ENCODE measurements at regions of chr4 and their contacts with region 1.

Region 1: GRCh38 chr4:163484906-163485305 is 9.6 kb upstream of the TMA16 start:
- DNase-seq: peak in 1 of 2 donors; percentile 29
- ATAC-seq: peak in 1 of 8 donors; percentile 41
- H3K4me3 ChIP-seq: no peak overlapping the region
- H3K27ac ChIP-seq: no peak overlapping the region
- H3K4me1 ChIP-seq: peaks cover 0 to 13% (median 0%) of the 10 kb centered on the region in 9 donors
- H3K27me3 ChIP-seq: peaks cover 0 to 6% (median 0%) of the 10 kb centered on the region in 7 donors
- CTCF ChIP-seq: peak in 8 of 9 donors; percentile 31 to 68 (median 56)

Region 2: DNA sequence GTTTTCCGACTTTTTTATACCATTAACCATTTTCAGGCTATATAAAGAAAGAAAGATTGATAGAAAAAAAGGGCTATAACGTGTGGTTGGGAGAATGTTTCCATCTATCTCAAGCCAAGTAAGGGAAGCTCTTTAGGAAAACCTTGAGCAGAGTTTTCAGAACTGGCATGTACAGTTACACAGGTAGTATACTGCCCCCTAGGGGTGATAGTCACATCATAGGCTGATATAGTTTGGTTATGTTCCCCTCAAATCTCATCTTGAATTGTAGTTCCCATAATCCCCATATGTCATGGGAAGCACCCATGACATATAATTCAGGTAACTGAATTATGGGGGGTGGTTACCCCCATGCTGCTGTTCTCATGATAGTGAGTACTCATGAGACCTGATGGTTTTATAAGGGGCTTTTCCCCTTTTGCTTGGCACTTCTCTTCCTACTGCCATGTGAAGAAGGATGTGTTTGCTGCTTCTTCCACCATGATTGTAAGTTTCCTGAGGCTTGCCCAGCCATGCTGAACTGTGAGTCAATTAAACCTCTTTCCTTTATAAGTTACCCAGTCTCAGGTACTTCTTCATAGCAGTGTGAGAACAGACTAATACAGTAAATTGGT is 196.4 kb after region 1 on chr4:
- intact Hi-C with region 1: loop called in 1 of 10 experiments (anchors 10 kb)
- DNase-seq: peak in 1 of 2 donors; percentile 7
- ATAC-seq: no peak
- H3K4me3 ChIP-seq: no peak overlapping the region
- H3K27ac ChIP-seq: no peak overlapping the region
- H3K4me1 ChIP-seq: no peaks in the 10 kb centered on the region
- H3K27me3 ChIP-seq: no peaks in the 10 kb centered on the region
- CTCF ChIP-seq: peak; percentile 19 to 71 (median 45)

Region 3: GRCh38 chr4:164731827-164732474 is 1247.0 kb after region 1 on chr4:
- intact Hi-C with region 1: loop called in 1 of 10 experiments (anchors 10 kb)
- DNase-seq: peak; percentile 11
- ATAC-seq: peak in 5 of 8 donors; percentile 47 to 66 (median 57)
- H3K4me3 ChIP-seq: no peak overlapping the region
- H3K27ac ChIP-seq: no peak overlapping the region
- H3K4me1 ChIP-seq: peaks cover 0 to 4% (median 0%) of the 10 kb centered on the region in 9 donors
- H3K27me3 ChIP-seq: peaks cover 0 to 5% (median 0%) of the 10 kb centered on the region in 7 donors
- CTCF ChIP-seq: peak; percentile 46 to 83 (median 74)

Measured in heart right ventricle (tissue), 16 donors.